ENCODE measurements at regions of chr3 and their contacts with region 1.

Region 1: GRCh38 chr3:153768561-153769469 is 352.4 kb upstream of the ARHGEF26 start:
- DNase-seq: peak; percentile 40 to 51
- H3K4me3 ChIP-seq: no peak overlapping the region
- H3K27ac ChIP-seq: no peak overlapping the region
- H3K4me1 ChIP-seq: no peaks in the 10 kb centered on the region
- H3K27me3 ChIP-seq: no peaks in the 10 kb centered on the region
- CTCF ChIP-seq: peak; percentile 62 to 92 (median 82)
- POLR2A ChIP-seq: no peak

Region 2: GRCh38 chr3:153043729-153044328 is 725.0 kb before region 1 on chr3:
- intact Hi-C with region 1: loop called (anchors 5 kb)
- DNase-seq: no peak
- H3K4me3 ChIP-seq: no peak overlapping the region
- H3K27ac ChIP-seq: no peak overlapping the region
- H3K4me1 ChIP-seq: no peaks in the 10 kb centered on the region
- H3K27me3 ChIP-seq: no peaks in the 10 kb centered on the region
- CTCF ChIP-seq: no peak
- POLR2A ChIP-seq: no peak

Region 3: DNA sequence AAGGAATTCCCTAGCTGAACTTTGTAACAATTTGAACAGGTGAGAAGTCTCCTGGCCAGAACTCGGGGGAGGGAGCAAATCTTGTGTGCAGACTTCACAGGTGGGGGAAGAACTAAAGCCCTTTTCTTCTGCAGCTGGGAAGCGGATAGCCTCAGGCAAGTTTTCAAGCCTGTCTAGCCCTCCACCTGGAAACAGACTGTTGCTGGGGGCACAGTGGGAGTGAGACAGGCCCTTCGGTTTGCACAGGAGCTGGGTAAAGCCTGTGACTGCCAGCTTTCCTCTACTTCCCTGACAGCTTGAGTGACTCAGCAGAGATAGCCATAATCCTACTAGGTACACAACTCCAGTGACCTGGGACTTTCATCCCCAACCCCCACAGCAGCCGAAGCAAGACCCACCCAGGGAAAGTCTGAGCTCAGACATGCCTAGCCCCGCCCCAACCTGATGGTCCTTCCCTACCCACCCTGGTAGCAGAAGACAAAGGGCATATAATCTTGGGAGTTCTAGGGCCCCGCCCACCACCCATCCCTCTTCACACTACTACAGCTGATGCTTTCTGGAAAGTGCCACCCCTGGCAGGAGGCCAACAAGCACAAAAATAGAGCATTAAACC is 128.0 kb before region 1 on chr3:
- intact Hi-C with region 1: no loop called
- DNase-seq: no peak
- H3K4me3 ChIP-seq: no peak overlapping the region
- H3K27ac ChIP-seq: no peak overlapping the region
- H3K4me1 ChIP-seq: no peaks in the 10 kb centered on the region
- H3K27me3 ChIP-seq: no peaks in the 10 kb centered on the region
- CTCF ChIP-seq: no peak
- POLR2A ChIP-seq: no peak

Region 4: DNA sequence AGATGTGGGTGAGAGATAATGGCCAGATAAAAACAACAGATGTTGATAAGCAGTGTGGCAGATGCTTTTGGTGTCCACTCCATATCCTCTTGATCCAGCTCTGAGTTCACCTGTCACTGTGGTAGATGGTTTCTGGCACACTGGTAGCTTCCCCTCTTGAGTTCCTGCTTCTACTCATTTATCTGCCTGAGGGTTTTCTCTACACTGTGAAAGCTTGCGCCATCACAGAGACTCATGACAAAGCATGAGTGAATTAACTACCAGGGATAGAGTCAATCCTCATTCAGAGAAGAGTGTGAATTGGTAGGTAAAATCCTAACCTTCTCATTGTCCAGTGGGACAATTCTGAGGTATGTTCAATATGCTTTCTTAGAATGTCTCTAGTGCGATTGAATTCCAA is 302.3 kb after region 1 on chr3:
- intact Hi-C with region 1: no loop called
- DNase-seq: no peak
- H3K4me3 ChIP-seq: no peak overlapping the region
- H3K27ac ChIP-seq: no peak overlapping the region
- H3K4me1 ChIP-seq: no peaks in the 10 kb centered on the region
- H3K27me3 ChIP-seq: no peaks in the 10 kb centered on the region
- CTCF ChIP-seq: no peak
- POLR2A ChIP-seq: no peak